K562 (cell line): ENCODE measurements at regions of chr2 and their contacts with region 1.

Region 1: DNA sequence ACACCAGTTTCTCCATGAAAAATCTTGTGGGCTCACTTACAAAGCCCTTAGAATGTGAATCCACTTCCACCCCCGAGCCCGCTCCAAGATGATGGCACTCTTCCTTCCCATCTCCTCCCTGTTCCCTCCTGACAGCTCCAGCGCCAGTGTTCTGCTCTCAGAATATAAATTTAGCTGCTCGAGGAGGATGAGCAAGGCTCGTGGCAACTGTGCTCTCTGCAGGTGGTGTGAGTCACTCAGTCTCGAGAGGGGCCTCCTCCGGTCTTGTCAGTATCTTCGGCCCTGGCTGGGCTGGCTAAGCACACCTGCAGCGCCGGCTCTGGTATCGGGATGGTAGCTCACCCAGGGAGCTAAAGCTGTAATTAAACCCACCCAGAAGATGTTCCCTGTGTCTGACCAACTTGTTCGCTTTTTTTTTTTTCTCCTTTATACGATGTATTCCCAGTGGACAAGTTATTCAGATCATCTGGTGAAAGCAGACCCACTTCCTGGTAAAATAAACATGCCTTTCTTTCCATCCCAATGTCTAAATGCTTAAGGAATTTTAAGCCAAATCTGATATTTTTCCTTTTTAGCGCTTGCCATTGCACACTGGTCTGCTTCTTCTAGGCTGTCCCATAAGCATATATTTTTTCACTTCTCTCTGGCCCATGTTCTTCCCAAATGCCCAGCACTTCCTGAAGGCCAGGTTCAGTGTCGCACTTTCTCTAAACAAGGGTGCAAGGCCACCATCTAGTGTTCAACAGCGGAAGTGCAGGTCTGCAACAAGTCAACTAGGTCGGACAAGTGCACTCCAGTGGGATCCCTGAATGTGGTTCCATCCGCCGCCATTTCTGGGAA is 31.4 kb upstream of the YPEL5 start:
- DNase-seq: peak; percentile 65 to 82 (median 71)
- ATAC-seq: peak; percentile 90
- H3K4me3 ChIP-seq: no peak overlapping the region
- H3K27ac ChIP-seq: no peak overlapping the region
- H3K4me1 ChIP-seq: no peaks in the 10 kb centered on the region; a peak in 1 of 5 replicates
- H3K27me3 ChIP-seq: peaks cover 15 to 58% of the 10 kb centered on the region in 2 experiments
- CTCF ChIP-seq: peak; percentile 88 to 94 (median 91)
- EP300 ChIP-seq: no peak
- POLR2A ChIP-seq: no peak
- RAD21 ChIP-seq: peak; percentile 69 to 84

Region 2: DNA sequence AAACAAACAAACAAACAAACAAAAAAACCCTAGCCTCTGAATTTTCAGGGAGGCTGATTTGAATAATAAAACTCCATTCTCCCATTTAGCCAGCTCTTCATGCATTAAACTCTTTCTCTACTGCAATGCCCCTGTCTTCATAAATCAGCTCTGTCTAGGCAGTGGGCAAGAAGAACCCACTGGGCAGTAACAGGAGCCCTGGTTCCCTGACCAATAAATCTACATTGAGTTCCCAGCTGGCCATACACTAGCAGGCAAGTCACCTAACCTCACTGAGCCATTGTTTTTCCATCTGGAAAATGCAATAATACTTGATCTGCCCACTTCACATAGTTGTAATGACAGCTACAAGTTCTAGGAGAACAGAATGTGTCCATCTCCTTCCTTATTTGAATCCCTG is 26.2 kb before region 1 on chr2:
- CTCF ChIA-PET with region 1: interaction called, 15 read pairs
- POLR2A ChIA-PET with region 1: no interaction called
- in situ Hi-C with region 1: no loop called
- intact Hi-C with region 1: loop called (anchors 1 kb)
- DNase-seq: no peak
- ATAC-seq: no peak
- H3K4me3 ChIP-seq: no peak overlapping the region
- H3K27ac ChIP-seq: no peak overlapping the region
- H3K4me1 ChIP-seq: no peaks in the 10 kb centered on the region
- H3K27me3 ChIP-seq: peaks cover 0 to 16% of the 10 kb centered on the region in 2 experiments; a peak in 3 of 5 replicates
- CTCF ChIP-seq: no peak
- EP300 ChIP-seq: no peak
- POLR2A ChIP-seq: no peak
- RAD21 ChIP-seq: no peak

Region 3: DNA sequence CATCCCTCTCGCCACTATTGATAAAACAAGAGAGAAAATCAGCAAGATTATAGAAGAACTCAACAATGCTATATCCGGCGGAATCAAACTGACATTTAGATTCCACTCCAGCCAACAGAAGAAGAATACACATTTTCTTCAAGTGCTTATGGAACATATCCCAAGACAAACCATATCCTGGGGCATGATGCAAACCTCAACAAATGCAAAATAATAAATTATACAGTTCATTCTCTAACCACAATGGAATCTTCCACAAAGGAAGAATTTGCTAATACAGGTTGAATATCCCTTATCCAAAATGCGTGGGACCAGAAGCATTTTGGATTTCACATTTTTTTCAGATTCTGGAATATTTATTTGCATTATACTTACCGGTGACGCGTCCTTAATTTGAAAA is 20.0 kb before region 1 on chr2:
- CTCF ChIA-PET with region 1: interaction called, 15 read pairs
- POLR2A ChIA-PET with region 1: no interaction called
- in situ Hi-C with region 1: no loop called
- intact Hi-C with region 1: loop called (anchors 1 kb)
- DNase-seq: no peak
- ATAC-seq: no peak
- H3K4me3 ChIP-seq: no peak overlapping the region
- H3K27ac ChIP-seq: no peak overlapping the region
- H3K4me1 ChIP-seq: no peaks in the 10 kb centered on the region
- H3K27me3 ChIP-seq: peaks cover 12 to 13% of the 10 kb centered on the region in 2 experiments; a peak in 4 of 5 replicates
- CTCF ChIP-seq: no peak
- EP300 ChIP-seq: no peak
- POLR2A ChIP-seq: no peak
- RAD21 ChIP-seq: no peak